Cardiac septum (tissue), 1 donor: ENCODE measurements at regions of chrX and their contacts with region 1.

Region 1: DNA sequence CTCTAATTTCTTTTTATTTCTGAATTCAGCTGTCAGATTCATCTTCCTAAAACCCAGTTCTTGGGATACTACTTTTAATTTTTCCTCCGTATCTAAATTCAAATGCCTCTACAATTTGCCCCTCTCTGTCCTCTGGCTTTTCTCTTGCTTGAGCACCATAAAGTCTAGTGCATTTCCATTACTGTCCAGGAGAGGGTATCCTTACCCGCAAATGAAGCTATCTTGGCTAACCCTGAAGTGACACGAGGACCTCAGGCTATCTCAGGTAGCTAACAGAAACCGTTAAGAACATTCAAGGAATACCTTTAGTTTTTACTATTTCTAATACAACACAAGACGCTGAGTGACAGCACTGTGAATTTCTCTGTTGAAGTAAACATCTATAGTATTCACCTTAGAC is 49.3 kb upstream of the PRR32 start:
- DNase-seq: no peak

Region 2: GRCh38 chrX:126820700-126821420 is 50.7 kb after region 1 on chrX:
- intact Hi-C with region 1: no loop called
- DNase-seq: no peak

Region 3: GRCh38 chrX:126847143-126847542 is 76.9 kb after region 1 on chrX:
- intact Hi-C with region 1: no loop called
- DNase-seq: no peak

Region 4: DNA sequence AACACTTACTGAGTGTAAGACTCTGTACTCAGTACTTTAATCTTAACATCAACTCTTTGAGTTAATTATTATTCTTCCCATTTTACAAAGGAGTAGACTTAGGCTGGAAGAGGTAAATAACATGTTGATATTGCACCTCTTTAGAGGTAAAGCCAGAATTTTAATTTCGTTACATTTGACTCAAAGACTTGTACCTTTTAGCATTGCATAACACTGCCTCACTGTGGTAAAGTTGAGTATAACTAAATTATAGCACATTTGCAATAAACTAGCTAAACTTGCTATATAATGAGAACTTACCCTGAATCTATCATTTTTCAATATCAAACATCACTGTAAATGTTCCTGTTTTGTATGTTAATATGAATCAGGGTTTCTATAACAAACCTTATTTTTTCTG is 267.9 kb after region 1 on chrX:
- intact Hi-C with region 1: loop called (anchors 5 kb)
- DNase-seq: no peak

Region 5: DNA sequence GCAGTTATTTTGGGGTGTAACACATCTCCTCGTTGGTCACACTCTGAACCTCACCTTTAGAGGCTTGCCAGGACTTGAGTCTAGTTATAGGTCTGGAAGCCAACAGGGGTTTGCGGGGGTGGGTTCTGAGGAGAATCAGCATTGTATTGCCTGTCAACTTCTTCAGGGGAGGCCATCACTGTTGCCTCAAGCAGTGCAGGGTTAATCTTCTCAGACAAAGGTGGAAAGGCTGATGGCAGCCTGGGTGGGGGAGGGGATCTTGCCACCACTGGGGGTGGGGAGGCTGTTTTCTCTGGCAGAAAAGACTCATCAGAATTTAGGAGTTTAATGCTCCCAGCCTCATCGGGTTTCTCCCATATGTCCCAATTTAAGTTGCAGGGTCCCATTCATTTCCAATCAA is 437.1 kb after region 1 on chrX:
- intact Hi-C with region 1: no loop called
- DNase-seq: no peak